ENCODE measurements at regions of chr3 and their contacts with region 1.

Region 1: DNA sequence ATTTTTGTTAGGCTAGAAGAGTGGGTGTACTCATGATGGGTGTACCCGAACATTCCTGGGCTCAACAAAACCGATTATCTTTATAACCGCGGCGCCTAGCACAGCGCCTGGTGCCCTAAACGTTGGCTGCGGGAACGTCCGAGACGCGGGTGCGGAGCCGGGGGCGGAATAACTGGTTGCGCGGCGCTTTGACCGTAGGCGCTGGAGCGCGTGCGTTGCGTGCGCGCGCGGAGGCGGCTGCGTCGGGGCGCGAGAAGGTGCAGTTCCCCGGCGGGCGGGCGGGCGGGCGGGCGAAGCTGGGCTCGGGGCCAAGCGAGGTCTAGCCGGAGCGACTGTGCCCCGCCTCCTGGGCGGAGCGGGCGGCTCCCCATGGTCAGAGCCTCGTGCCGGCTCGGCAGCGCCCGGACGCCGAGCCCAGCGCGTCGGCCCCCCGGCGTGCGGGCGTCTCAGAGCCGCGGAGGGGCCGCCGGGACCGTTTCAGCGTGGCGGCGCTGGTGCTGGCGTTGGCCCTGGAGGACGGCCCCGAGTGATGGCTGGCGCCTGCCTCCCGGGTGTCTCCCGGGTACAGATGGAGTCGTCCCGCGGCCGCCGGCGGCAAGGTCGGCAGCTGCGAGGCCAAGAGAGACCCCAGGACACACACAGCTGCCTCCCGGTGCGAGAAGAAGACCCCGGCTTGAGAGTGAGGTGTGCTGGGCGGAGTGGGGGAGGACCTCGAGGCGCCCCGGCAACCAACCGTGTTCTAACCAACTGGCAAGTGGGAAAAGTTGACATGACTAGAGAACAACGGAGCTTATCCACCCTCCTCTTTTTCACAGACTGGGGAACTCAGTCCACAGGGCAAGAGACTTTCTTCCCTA is at the start of gene PLAAT1:
- DNase-seq: peak; percentile 62
- H3K4me3 ChIP-seq: peak within 1 kb of the TSS in 2 of 3 experiments; percentile 52 to 66
- H3K27ac ChIP-seq: no peak within 1 kb of the TSS
- H3K4me1 ChIP-seq: peaks cover 5% of the 10 kb centered on the region
- H3K27me3 ChIP-seq: peaks cover 3 to 15% of the 10 kb centered on the region in 2 experiments
- CTCF ChIP-seq: no peak
- POLR2A ChIP-seq: no peak
- total RNA-seq, gene PLAAT1: 0.58 and 0.75 TPM in 2 replicates

Region 2: GRCh38 chr3:193301433-193301832 is 60.4 kb after region 1 on chr3:
- CTCF ChIA-PET with region 1: interaction called, 3 read pairs
- POLR2A ChIA-PET with region 1: no interaction called
- dilution Hi-C with region 1: no loop called
- intact Hi-C with region 1: loop called (anchors 2 kb)
- DNase-seq: peak; percentile 85
- H3K4me3 ChIP-seq: no peak overlapping the region
- H3K27ac ChIP-seq: no peak overlapping the region
- H3K4me1 ChIP-seq: peaks cover 8% of the 10 kb centered on the region
- H3K27me3 ChIP-seq: no peaks in the 10 kb centered on the region
- CTCF ChIP-seq: no peak
- POLR2A ChIP-seq: no peak

Measured in endothelial cell of umbilical vein (primary cell).